Activated CD4-positive, alpha-beta memory T cell treated with anti-CD3 and anti-CD28 coated beads, Interleukin-2, amount 10 ng/mL, durations not matched to agents 7 days and 5 days (primary cell): ENCODE measurements at regions of chr14 and their contacts with region 1.

Region 1: GRCh38 chr14:65927931-65928356 is 515.4 kb downstream of the FUT8 start:
- DNase-seq: peak; percentile 91
- H3K4me3 Mint-ChIP-seq: no peak overlapping the region
- H3K27ac Mint-ChIP-seq: peak overlapping the region; percentile 95
- H3K4me1 Mint-ChIP-seq: peaks cover 64% of the 10 kb centered on the region
- H3K27me3 Mint-ChIP-seq: peaks cover 2% of the 10 kb centered on the region

Region 2: DNA sequence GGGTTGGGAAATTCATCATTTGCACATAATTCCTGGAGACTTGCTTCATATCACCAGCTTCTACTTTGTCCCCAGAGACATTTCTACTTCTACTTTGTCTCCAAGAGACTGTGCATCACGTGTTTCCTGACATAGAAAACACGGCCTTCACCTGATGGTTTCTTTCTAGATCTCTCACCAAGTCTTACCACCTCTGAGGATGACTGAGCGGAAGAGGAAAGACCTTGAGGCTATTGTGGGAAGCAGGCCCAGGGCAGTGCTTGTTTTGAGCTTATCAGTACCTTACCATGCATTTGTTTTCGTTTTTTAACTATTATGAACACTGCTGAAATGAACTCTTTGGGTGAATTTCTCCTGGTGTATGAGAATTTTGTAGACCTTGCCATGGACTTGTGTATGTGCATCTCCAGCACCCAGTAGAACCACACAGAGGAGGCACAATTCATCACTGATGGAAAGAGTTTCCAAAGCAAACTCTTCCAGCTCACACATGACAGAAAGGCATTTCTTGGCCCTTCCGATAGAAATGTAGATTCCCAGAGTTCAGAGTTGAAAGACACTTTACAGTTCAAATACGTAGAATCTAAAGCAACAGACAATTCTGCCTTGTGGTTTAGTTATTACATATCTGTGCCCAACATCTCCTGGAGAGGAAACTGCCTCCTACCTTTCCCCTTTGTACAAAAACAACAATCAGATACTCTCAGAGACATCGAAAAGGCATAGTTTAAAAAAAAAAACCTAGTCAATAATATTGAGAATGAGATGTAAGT is 80.7 kb before region 1 on chr14:
- CTCF ChIA-PET with region 1: interaction called, 17 read pairs
- POLR2A ChIA-PET with region 1: interaction called, 90 read pairs
- DNase-seq: peak; percentile 88
- H3K4me3 Mint-ChIP-seq: peak overlapping the region; percentile 55
- H3K27ac Mint-ChIP-seq: peak overlapping the region; percentile 97
- H3K4me1 Mint-ChIP-seq: peaks cover 76% of the 10 kb centered on the region
- H3K27me3 Mint-ChIP-seq: no peaks in the 10 kb centered on the region

Region 3: GRCh38 chr14:65866886-65867285 is 61.1 kb before region 1 on chr14:
- CTCF ChIA-PET with region 1: interaction called, 5 read pairs
- POLR2A ChIA-PET with region 1: interaction called, 23 read pairs
- DNase-seq: no peak
- H3K4me3 Mint-ChIP-seq: no peak overlapping the region
- H3K27ac Mint-ChIP-seq: no peak overlapping the region
- H3K4me1 Mint-ChIP-seq: peaks cover 53% of the 10 kb centered on the region
- H3K27me3 Mint-ChIP-seq: no peaks in the 10 kb centered on the region

Region 4: DNA sequence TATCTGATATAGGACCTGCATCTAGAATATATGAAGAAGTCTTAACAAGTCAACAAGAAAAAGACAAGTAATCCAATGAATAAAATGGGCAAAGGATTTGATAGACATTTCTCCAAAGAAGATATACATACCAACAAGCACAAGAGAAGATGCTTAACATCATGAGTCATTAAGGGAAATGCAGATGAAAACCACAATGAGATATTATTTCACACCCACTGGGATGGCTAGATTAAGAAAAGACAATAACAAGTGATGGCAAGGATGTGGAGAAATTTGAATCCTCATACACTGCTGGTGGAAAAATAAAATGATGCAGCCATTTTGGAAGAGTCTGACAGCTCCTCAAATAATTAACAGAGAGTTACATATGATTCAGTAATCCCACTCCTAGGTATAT is 12.8 kb before region 1 on chr14:
- CTCF ChIA-PET with region 1: interaction called, 3 read pairs
- POLR2A ChIA-PET with region 1: interaction called, 39 read pairs
- DNase-seq: no peak
- H3K4me3 Mint-ChIP-seq: no peak overlapping the region
- H3K27ac Mint-ChIP-seq: peak overlapping the region; percentile 16
- H3K4me1 Mint-ChIP-seq: peaks cover 34% of the 10 kb centered on the region
- H3K27me3 Mint-ChIP-seq: no peaks in the 10 kb centered on the region

Region 5: GRCh38 chr14:65949711-65950516 is 22.0 kb after region 1 on chr14:
- CTCF ChIA-PET with region 1: interaction called, 11 read pairs
- POLR2A ChIA-PET with region 1: interaction called, 28 read pairs
- DNase-seq: peak; percentile 31
- H3K4me3 Mint-ChIP-seq: no peak overlapping the region
- H3K27ac Mint-ChIP-seq: peak overlapping the region; percentile 85
- H3K4me1 Mint-ChIP-seq: peaks cover 42% of the 10 kb centered on the region
- H3K27me3 Mint-ChIP-seq: no peaks in the 10 kb centered on the region

Region 6: GRCh38 chr14:65972891-65973290 is 44.9 kb after region 1 on chr14:
- CTCF ChIA-PET with region 1: no interaction called
- POLR2A ChIA-PET with region 1: no interaction called
- DNase-seq: no peak
- H3K4me3 Mint-ChIP-seq: no peak overlapping the region
- H3K27ac Mint-ChIP-seq: no peak overlapping the region
- H3K4me1 Mint-ChIP-seq: no peaks in the 10 kb centered on the region
- H3K27me3 Mint-ChIP-seq: peaks cover 11% of the 10 kb centered on the region